ENCODE measurements at regions of chr3 and their contacts with region 1.

Region 1: GRCh38 chr3:44568561-44568960 is 13.6 kb downstream of the ZKSCAN7 start:
- DNase-seq: no peak
- ATAC-seq: no peak
- H3K4me3 ChIP-seq: no peak overlapping the region
- H3K27ac ChIP-seq: no peak overlapping the region
- H3K4me1 ChIP-seq: no peaks in the 10 kb centered on the region
- H3K27me3 ChIP-seq: no peaks in the 10 kb centered on the region
- CTCF ChIP-seq: no peak
- EP300 ChIP-seq: no peak
- POLR2A ChIP-seq: no peak
- RAD21 ChIP-seq: no peak

Region 2: GRCh38 chr3:44554626-44555592 is 13.7 kb before region 1 on chr3 and contains the start of gene ZKSCAN7:
- CTCF ChIA-PET with region 1: no interaction called
- POLR2A ChIA-PET with region 1: no interaction called
- in situ Hi-C with region 1: no loop called
- intact Hi-C with region 1: loop called (anchors 1 kb)
- DNase-seq: peak; percentile 37
- ATAC-seq: peak; percentile 89
- H3K4me3 ChIP-seq: peak within 1 kb of the TSS; percentile 58 to 75 (median 74)
- H3K27ac ChIP-seq: peak within 1 kb of the TSS; percentile 49
- H3K4me1 ChIP-seq: peaks cover 25% of the 10 kb centered on the region; the same call in 1 of the 2 replicates
- H3K27me3 ChIP-seq: peaks cover 1 to 27% of the 10 kb centered on the region in 2 experiments; a peak in 4 of 5 replicates
- CTCF ChIP-seq: no peak
- EP300 ChIP-seq: no peak
- POLR2A ChIP-seq: peak; percentile 41 to 59; a peak in 3 of 4 replicates
- RAD21 ChIP-seq: peak; percentile 35; the same call in 1 of the 2 replicates
- total RNA-seq, gene ZKSCAN7: 3.3 and 3.8 TPM in 2 replicates

Region 3: DNA sequence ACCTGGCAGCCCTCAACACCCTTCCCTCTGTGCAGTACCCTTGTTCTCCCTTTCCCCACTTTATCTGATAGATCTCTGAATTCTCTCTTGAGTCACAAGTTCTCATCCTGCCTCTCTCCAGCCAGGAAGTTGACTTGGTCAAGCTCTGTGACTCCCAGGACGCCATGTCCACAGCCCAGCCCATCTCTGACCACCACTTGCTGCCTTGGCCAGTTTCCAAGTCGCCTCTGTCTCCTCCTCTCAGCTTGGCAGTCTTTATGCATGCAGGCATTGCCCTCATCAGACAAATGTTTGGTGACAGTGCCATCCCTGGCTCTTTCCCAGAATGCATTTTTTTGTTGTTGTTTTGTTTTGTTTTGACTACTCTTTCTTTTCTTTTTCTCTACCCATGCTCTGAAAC is 105.7 kb after region 1 on chr3:
- CTCF ChIA-PET with region 1: no interaction called
- POLR2A ChIA-PET with region 1: no interaction called
- in situ Hi-C with region 1: no loop called
- intact Hi-C with region 1: no loop called
- DNase-seq: no peak
- ATAC-seq: no peak
- H3K4me3 ChIP-seq: no peak overlapping the region
- H3K27ac ChIP-seq: no peak overlapping the region
- H3K4me1 ChIP-seq: no peaks in the 10 kb centered on the region
- H3K27me3 ChIP-seq: peaks cover 0 to 7% of the 10 kb centered on the region in 2 experiments; a peak in 2 of 5 replicates
- CTCF ChIP-seq: no peak
- EP300 ChIP-seq: no peak
- POLR2A ChIP-seq: no peak
- RAD21 ChIP-seq: no peak

Region 4: DNA sequence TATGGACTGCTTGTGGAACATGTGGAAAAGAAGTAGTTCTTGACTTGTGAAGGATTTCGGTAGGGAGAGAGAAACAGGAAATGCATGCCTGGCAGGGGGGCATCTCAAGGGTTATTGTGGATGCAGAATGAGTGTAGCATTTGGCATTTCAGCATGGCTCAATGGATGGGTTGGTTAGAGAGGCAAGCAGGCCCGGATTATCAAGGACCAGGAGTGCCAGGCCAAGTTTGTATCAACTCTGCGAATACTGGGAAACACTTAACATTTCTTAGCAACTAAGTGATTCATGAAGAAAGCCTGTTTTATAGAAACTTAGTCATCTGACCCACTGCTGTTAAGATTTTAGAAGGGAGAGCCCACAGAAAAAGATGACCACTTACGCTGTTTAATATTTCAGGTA is 226.6 kb after region 1 on chr3:
- CTCF ChIA-PET with region 1: no interaction called
- POLR2A ChIA-PET with region 1: no interaction called
- in situ Hi-C with region 1: no loop called
- intact Hi-C with region 1: no loop called
- DNase-seq: no peak
- ATAC-seq: no peak
- H3K4me3 ChIP-seq: no peak overlapping the region
- H3K27ac ChIP-seq: no peak overlapping the region
- H3K4me1 ChIP-seq: no peaks in the 10 kb centered on the region
- H3K27me3 ChIP-seq: no peaks in the 10 kb centered on the region
- CTCF ChIP-seq: no peak
- EP300 ChIP-seq: no peak
- POLR2A ChIP-seq: no peak
- RAD21 ChIP-seq: no peak

Measured in HepG2 (cell line).